Adrenal gland (tissue), 19 donors: ENCODE measurements at regions of chr2 and their contacts with region 1.

Region 1: DNA sequence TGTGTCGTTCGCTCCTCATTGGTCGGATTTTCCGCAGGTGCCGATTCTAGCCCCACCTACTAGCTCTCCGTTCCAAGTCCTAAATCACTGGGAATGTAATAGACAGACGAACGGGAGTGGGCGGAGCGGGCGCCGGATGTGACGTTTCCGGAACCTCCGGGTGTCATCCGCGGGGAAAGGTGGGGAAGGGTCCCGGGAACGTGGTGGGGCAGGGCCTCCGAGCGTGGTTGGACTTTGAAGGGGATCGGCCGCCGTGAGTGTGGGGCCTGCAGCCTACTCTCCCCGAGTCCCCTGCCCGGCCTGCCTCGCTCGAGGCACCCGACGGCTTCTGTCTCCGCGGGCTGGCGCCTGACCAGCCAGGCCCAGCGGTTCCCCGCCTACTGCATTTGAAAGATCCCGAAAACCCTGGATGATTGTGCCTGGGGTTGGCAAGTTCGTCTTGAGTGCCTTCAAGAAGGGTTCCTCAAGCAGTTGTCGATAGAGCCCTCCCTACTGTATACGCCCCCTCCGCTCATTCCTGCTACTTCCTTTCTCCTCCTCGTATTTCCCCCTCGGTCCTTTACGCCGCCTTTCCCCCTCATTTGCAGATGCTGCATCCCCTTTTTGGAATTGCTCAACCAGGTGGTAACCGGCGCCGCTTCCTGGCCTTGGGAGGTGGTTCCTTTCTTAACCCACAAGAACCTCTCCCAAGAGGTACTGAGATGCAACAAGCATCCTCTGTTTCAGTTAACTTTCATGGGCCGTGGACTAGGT is at the start of gene STAMBP:
- DNase-seq: peak; percentile 95 to 99 (median 98)
- H3K4me3 ChIP-seq: peak within 1 kb of the TSS; percentile 23 to 73 (median 48)
- H3K27ac ChIP-seq: peak within 1 kb of the TSS; percentile 10 to 93 (median 83)
- H3K4me1 ChIP-seq: peaks cover 0 to 27% of the 10 kb centered on the region in 2 donors
- H3K27me3 ChIP-seq: no peaks in the 10 kb centered on the region
- CTCF ChIP-seq: no peak
- POLR2A ChIP-seq: peak; percentile 34 to 38
- total RNA-seq, gene STAMBP: 15.7 to 40.2 (median 29.0) TPM

Region 2: DNA sequence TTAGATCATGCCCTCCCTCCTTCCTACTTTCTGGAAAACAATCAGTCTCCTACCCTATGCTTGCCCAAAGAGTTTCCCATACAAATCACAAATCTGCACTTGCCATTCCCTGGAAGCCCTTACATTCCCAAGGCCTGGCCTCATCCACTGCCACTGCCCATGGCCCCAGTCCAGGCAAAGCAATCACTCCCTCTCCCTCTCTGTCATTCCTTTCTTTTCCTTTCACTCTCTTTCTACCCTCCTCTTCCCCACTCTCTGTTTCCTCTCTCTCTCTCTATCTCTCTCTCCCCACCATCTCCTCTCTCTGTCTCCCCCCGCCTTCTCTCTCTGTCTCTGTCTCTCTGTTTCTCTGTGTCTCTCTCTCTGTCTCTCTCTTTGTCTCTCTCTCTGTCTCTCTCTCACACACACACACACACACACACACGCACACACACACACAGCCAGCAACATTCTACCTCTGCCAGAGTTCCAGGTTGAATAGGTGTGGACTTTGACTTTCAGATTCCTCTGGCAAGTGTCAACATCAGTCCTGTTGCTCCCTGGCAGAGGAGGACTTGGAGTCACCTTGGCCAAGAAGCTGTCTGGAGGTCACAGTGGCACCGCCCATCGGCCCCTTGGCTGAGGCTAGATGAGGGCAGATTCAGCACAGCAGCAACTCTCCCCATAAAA is 143.1 kb before region 1 on chr2:
- intact Hi-C with region 1: no loop called
- DNase-seq: peak in 1 of 7 donors; percentile 14
- H3K4me3 ChIP-seq: no peak overlapping the region
- H3K27ac ChIP-seq: no peak overlapping the region
- H3K4me1 ChIP-seq: no peaks in the 10 kb centered on the region
- H3K27me3 ChIP-seq: no peaks in the 10 kb centered on the region
- CTCF ChIP-seq: no peak
- POLR2A ChIP-seq: no peak

Region 3: DNA sequence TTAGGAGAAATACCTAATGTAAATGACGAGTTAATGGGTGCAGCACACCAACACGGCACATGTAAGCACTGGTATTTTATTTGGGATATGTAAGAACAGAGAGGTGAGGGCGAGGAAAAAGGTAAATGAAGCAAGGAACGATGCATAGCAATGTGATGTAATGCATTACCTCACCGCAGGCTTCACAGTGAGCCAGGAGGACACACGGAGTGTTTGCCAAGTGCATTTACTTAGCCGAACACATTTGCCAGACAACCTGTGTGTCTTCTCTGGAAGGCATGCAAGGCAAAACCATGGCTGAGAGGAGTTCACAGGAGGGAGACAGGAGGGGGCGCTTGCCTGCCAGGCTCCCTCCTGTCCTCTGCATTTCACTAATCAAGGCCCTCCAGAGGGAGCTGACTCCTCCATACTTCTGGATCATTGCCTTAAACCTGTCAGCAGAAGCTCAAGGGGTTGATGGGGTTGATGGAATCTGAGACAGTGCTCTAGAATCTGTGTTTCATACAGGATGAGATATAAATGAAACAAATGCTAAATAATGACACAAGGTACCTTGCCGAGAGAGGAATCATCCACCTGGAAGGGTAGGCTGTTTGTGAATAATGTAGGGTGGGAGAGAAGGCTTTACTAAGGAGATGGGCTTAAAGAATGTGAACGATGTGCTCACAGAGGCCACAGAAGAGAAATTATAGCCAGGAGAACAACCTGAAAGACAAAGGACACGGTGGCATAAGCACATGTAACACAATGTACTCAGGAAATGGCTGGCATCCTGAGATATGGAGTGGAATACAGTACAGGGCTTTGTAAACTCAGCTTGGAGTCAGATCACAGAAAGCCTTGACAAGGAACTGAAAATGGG is 82.7 kb before region 1 on chr2:
- intact Hi-C with region 1: no loop called
- DNase-seq: no peak
- H3K4me3 ChIP-seq: no peak overlapping the region
- H3K27ac ChIP-seq: peak overlapping the region in 2 of 5 donors; percentile 3 to 51
- H3K4me1 ChIP-seq: no peaks in the 10 kb centered on the region
- H3K27me3 ChIP-seq: no peaks in the 10 kb centered on the region
- CTCF ChIP-seq: no peak
- POLR2A ChIP-seq: no peak

Region 4: DNA sequence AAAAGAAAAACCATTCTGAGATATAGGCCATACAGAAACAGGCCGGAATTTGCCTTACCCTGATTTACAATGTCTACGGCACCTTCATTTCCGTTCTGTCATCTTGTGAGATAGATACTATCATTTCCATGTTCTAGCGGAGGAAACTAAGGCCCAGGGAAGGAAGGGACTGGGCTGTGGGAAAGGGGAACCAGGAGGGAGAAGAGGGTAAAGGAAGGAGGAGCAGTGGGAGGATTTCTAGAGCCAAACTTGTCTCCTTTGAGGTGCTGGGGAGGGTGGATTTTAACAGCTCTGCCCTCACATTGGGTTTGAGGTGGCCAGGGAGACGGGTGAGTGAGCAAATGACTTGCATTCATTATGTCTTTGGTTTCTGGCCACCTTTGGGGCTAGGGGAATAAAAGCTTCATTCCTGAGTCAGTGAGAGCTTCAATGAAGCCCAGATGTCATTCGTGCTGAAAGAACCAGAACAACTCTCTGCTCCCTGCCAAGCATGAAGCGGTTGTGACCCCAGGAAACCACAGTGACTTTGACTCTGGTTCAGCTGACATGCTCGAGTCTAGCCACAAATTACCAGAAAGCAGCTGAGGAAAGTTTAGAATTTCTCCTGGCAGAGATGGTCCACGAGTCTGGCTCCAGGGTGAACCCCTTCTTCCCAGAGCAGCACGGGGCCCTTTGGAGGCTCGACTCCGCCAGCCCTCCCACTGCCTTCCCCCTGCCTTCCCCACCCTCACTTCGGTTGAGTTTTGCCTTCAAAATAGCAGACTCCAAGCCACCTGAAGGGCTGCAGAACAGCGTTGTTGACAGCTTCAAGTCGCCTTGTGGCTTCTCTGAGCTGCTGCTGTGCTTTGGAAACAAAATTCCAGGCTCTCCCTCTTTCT is 67.6 kb after region 1 on chr2:
- intact Hi-C with region 1: no loop called
- DNase-seq: no peak
- H3K4me3 ChIP-seq: no peak overlapping the region
- H3K27ac ChIP-seq: no peak overlapping the region
- H3K4me1 ChIP-seq: no peaks in the 10 kb centered on the region
- H3K27me3 ChIP-seq: no peaks in the 10 kb centered on the region
- CTCF ChIP-seq: no peak
- POLR2A ChIP-seq: no peak

Region 5: GRCh38 chr2:74147727-74148456 is 318.9 kb after region 1 on chr2 and contains the start of gene BOLA3:
- intact Hi-C with region 1: loop called in 1 of 2 experiments (anchors 10 kb)
- DNase-seq: peak; percentile 86 to 93 (median 88)
- H3K4me3 ChIP-seq: peak within 1 kb of the TSS; percentile 32 to 80 (median 46)
- H3K27ac ChIP-seq: peak within 1 kb of the TSS in 4 of 5 donors; percentile 27 to 77 (median 57)
- H3K4me1 ChIP-seq: peaks cover 3 to 19% of the 10 kb centered on the region in 2 donors
- H3K27me3 ChIP-seq: no peaks in the 10 kb centered on the region
- CTCF ChIP-seq: peak in 3 of 6 experiments; percentile 62 to 64 (median 64)
- POLR2A ChIP-seq: peak in 1 of 2 donors; percentile 46
- total RNA-seq, gene BOLA3: 17.1 to 73.5 (median 44.3) TPM

Region 6: DNA sequence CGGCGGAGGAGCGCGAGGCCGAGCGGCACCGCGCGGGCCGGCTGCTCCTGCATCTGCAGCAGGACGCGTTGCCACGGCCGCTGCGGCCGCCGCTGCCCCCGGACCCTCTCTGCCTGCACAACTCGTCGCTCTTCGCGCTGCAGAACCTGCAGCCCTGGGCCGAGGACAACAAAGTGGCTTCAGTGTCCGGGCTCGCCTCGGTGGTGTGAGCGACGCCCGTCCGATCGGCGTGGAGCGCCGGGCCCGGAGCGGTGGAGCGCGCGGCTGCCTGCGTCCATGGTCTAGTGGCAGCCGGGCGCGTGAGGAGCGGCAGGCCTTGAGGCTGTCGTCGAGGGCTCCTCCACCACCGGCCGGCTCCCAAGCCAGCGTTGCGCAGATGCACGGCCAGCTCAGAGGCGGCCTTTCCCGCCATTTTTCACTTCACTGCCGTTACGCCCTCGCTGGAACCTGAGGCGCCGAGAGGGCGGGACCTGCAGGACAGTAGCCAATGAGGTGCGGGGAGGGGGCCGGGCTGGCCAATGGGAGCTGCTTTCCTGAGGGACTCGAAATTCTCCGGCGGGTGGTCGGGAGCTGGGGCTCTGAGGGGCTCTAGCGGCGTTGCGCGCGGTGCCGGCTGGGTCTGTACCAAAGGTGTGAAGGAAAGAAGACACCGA is 687.1 kb after region 1 on chr2:
- intact Hi-C with region 1: no loop called
- DNase-seq: peak; percentile 52 to 88 (median 60)
- H3K4me3 ChIP-seq: peak overlapping the region in 1 of 4 donors; percentile 39
- H3K27ac ChIP-seq: no peak overlapping the region
- H3K4me1 ChIP-seq: peaks cover 0 to 18% of the 10 kb centered on the region in 2 donors
- H3K27me3 ChIP-seq: peaks cover 92% of the 10 kb centered on the region
- CTCF ChIP-seq: peak in 1 of 6 experiments; percentile 1
- POLR2A ChIP-seq: no peak